Panc1 (cell line): ENCODE measurements at regions of chr12 and their contacts with region 1.

Region 1: DNA sequence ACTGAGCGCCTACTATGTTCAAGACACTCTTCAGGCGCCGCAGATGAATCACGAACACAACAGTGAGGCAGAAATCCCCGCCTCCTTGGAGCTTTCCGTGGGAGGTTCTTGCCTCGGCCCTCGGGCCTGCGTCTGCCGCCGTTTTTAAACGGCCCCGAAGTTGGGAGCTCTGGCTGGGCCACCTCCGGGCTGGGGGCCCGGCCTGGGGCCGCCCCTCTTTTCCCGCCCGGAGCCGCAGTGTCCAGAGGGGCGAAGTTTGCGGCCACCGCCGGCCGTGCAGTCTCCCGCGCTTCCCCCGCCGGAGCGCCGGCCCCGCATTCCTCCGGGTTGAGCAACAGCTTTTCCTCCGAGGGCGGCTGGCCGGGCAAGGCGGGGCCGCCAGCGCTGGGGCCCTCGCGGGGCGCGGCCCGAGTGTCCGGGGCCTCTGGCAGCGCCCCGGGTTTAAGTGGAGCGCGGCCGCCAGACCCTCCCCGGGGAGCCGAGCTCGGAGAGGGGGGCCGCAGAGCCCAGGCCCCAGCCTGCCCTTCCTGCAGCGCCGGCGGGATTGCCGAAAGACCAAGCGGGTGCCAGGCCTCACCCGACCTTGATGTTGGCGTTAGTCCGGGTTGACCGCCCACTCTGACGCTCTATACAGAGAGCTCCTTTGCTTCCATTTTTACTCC is 18.7 kb upstream of the CTDSP2 start:
- DNase-seq: no peak
- ATAC-seq: peak; percentile 91
- H3K4me3 ChIP-seq: peak overlapping the region; percentile 44 to 66
- H3K27ac ChIP-seq: peak overlapping the region; percentile 94
- H3K4me1 ChIP-seq: peaks cover 23% of the 10 kb centered on the region
- H3K27me3 ChIP-seq: no peaks in the 10 kb centered on the region
- CTCF ChIP-seq: no peak

Region 2: GRCh38 chr12:57852620-57853500 is 12.4 kb before region 1 on chr12:
- CTCF ChIA-PET with region 1: no interaction called
- POLR2A ChIA-PET with region 1: interaction called, 14 read pairs
- in situ Hi-C with region 1: no loop called
- intact Hi-C with region 1: no loop called
- DNase-seq: no peak
- ATAC-seq: no peak
- H3K4me3 ChIP-seq: no peak overlapping the region
- H3K27ac ChIP-seq: no peak overlapping the region
- H3K4me1 ChIP-seq: peaks cover 2% of the 10 kb centered on the region; the same call in 1 of the 2 replicates
- H3K27me3 ChIP-seq: no peaks in the 10 kb centered on the region
- CTCF ChIP-seq: no peak

Region 3: GRCh38 chr12:57896434-57897201 is 31.4 kb after region 1 on chr12:
- CTCF ChIA-PET with region 1: no interaction called
- POLR2A ChIA-PET with region 1: interaction called, 11 read pairs
- in situ Hi-C with region 1: no loop called
- intact Hi-C with region 1: no loop called
- DNase-seq: peak; percentile 20
- ATAC-seq: peak; percentile 76
- H3K4me3 ChIP-seq: peak overlapping the region; percentile 46 to 60
- H3K27ac ChIP-seq: peak overlapping the region; percentile 97
- H3K4me1 ChIP-seq: peaks cover 62% of the 10 kb centered on the region
- H3K27me3 ChIP-seq: no peaks in the 10 kb centered on the region
- CTCF ChIP-seq: no peak; the same call in 1 of the 2 replicates

Region 4: DNA sequence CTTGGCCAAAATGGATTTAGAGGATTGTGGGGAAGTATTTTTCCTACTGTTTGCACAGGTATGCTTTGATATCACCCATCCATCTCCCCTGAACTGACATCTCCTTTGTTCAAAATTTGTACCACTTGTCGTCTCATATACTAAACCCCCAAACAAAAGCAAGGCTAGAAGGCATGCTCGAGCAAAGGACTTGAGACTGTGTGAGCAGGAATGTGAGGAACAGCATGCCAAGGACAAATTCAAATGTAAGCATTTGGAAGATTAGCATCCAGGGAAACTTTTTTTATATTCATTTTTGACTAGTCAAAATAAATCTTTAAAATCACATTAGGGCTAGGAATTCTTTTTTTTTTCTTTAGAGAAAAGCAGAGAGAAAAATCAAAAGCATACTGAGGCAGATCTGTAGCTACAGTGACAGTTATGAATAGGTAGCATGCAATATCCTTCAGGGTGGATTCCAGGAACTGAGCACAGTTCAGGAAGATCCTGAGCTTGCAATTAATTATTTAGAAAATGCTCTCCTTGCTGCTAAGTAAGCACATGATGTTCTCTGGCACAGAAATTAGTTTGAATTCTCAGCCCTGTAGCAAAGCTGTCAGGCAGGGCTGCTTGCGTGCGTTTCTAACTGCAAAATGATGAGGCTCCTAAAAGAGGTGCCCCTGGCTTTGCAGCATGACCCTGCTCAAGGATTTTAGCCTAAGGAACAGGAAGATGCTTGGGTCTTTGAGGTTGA is 727.4 kb after region 1 on chr12:
- CTCF ChIA-PET with region 1: no interaction called
- POLR2A ChIA-PET with region 1: no interaction called
- in situ Hi-C with region 1: no loop called
- intact Hi-C with region 1: no loop called
- DNase-seq: no peak
- ATAC-seq: no peak
- H3K4me3 ChIP-seq: no peak overlapping the region
- H3K27ac ChIP-seq: no peak overlapping the region
- H3K4me1 ChIP-seq: no peaks in the 10 kb centered on the region
- H3K27me3 ChIP-seq: no peaks in the 10 kb centered on the region
- CTCF ChIP-seq: no peak

Region 5: DNA sequence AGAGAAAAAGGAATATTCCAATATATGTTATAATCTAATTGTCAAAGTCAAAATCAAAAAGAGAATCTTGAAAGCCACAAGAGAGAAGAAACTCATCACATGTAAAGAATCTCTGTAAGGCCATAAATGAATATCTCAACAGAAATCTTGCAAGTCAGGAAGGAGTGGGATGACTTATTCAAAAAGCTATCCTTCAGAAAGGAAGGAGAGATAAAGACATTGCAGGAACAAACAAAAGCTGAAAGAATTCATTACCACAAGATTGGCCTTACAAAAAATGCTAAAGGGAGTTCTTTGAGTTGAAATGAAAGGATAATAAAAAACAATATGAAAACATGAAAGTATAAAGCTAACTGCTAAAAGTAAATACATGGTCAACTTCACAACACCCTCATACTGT is 768.3 kb after region 1 on chr12:
- CTCF ChIA-PET with region 1: no interaction called
- POLR2A ChIA-PET with region 1: no interaction called
- in situ Hi-C with region 1: no loop called
- intact Hi-C with region 1: no loop called
- DNase-seq: no peak
- ATAC-seq: no peak
- H3K4me3 ChIP-seq: no peak overlapping the region
- H3K27ac ChIP-seq: no peak overlapping the region
- H3K4me1 ChIP-seq: no peaks in the 10 kb centered on the region
- H3K27me3 ChIP-seq: no peaks in the 10 kb centered on the region
- CTCF ChIP-seq: no peak